ENCODE measurements at regions of chr12 and their contacts with region 1.

Region 1: DNA sequence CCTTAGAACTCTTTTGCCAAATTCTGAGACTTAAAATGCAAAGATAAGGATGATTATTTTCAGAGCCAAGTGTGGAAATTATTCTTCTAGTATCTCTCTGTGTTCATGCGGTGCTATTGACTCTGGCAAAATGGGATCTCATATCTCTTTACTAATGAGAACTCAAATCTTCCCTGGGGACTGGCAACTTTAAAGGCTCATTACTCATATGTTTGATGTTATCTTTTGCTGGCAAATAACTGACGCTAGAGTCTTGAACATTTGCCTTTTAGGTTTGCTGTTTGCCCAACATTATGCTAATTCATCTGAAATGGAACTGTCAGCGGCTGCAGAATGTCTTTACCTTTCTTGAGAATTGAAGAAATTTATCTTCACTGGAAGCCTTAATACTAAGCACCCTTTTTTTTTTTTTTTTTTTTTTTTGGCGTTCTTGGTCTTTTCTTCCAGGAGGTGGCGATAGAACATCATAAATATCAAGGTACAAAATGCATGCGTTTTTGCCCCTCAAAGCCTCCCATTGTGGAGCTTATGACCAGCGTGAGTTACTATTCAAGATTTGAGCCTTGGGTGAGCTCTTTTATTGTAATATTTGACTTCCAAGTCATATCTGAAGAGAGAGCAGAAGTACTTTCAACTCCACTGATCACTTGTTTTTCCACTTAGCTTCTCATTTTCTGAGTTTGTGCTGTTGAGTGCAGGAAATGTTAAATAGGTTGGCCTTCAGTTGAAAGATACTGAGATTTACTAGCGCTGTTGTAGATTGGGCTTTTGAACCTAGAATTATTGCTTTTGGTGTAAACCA is 86.6 kb downstream of the CAND1 start:
- DNase-seq: peak in 4 of 9 experiments; percentile 11 to 76 (median 44)
- ATAC-seq: peak; percentile 61
- H3K4me3 ChIP-seq: no peak overlapping the region
- H3K4me3 Mint-ChIP-seq: no peak overlapping the region
- H3K27ac ChIP-seq: no peak overlapping the region
- H3K27ac Mint-ChIP-seq: no peak overlapping the region
- H3K4me1 ChIP-seq: peaks cover 5% of the 10 kb centered on the region
- H3K4me1 Mint-ChIP-seq: peaks cover 7% of the 10 kb centered on the region
- H3K27me3 ChIP-seq: no peaks in the 10 kb centered on the region
- H3K27me3 Mint-ChIP-seq: no peaks in the 10 kb centered on the region
- CTCF ChIP-seq: peak; percentile 76

Region 2: GRCh38 chr12:67182551-67182950 is 173.2 kb before region 1 on chr12:
- CTCF ChIA-PET with region 1: no interaction called
- POLR2A ChIA-PET with region 1: no interaction called
- intact Hi-C with region 1: no loop called
- DNase-seq: no peak
- ATAC-seq: no peak
- H3K4me3 ChIP-seq: no peak overlapping the region
- H3K4me3 Mint-ChIP-seq: no peak overlapping the region
- H3K27ac ChIP-seq: no peak overlapping the region
- H3K27ac Mint-ChIP-seq: no peak overlapping the region
- H3K4me1 ChIP-seq: no peaks in the 10 kb centered on the region
- H3K4me1 Mint-ChIP-seq: no peaks in the 10 kb centered on the region
- H3K27me3 ChIP-seq: peaks cover 4 to 5% of the 10 kb centered on the region in 2 experiments
- H3K27me3 Mint-ChIP-seq: peaks cover 25% of the 10 kb centered on the region
- CTCF ChIP-seq: no peak

Region 3: DNA sequence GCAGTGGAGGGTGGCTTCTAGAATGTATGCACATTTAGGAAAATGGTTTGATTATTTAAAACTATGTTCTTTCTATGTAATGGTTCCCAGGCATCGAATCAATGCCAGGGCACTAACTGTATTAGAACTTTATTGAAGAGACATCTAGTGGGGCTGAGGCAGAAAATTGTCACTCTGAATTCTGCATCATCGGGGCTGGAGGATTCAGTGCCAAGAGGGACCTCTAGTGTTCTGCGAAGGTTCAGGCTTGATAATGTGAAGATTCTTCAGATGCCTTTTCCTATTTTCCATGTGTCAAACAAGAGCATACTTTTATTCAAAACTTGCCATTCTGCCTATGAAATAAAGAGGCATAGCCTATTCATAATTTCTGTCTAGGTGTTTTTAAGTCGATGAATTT is 59.7 kb after region 1 on chr12:
- CTCF ChIA-PET with region 1: no interaction called
- POLR2A ChIA-PET with region 1: no interaction called
- intact Hi-C with region 1: no loop called
- DNase-seq: peak in 1 of 9 experiments; percentile 4
- ATAC-seq: no peak
- H3K4me3 ChIP-seq: no peak overlapping the region
- H3K4me3 Mint-ChIP-seq: no peak overlapping the region
- H3K27ac ChIP-seq: no peak overlapping the region
- H3K27ac Mint-ChIP-seq: no peak overlapping the region
- H3K4me1 ChIP-seq: no peaks in the 10 kb centered on the region
- H3K4me1 Mint-ChIP-seq: no peaks in the 10 kb centered on the region
- H3K27me3 ChIP-seq: no peaks in the 10 kb centered on the region
- H3K27me3 Mint-ChIP-seq: no peaks in the 10 kb centered on the region
- CTCF ChIP-seq: no peak

Region 4: GRCh38 chr12:67441736-67442346 is 86.1 kb after region 1 on chr12:
- CTCF ChIA-PET with region 1: interaction called, 4 read pairs
- POLR2A ChIA-PET with region 1: no interaction called
- intact Hi-C with region 1: loop called (anchors 1 to 2 kb)
- DNase-seq: peak; percentile 55 to 89 (median 80)
- ATAC-seq: peak; percentile 98
- H3K4me3 ChIP-seq: no peak overlapping the region
- H3K4me3 Mint-ChIP-seq: peak overlapping the region; percentile 45
- H3K27ac ChIP-seq: no peak overlapping the region
- H3K27ac Mint-ChIP-seq: peak overlapping the region; percentile 60
- H3K4me1 ChIP-seq: peaks cover 13% of the 10 kb centered on the region
- H3K4me1 Mint-ChIP-seq: peaks cover 26% of the 10 kb centered on the region
- H3K27me3 ChIP-seq: no peaks in the 10 kb centered on the region
- H3K27me3 Mint-ChIP-seq: no peaks in the 10 kb centered on the region
- CTCF ChIP-seq: peak; percentile 70

Region 5: GRCh38 chr12:67698672-67699581 is 343.1 kb after region 1 on chr12:
- CTCF ChIA-PET with region 1: no interaction called
- POLR2A ChIA-PET with region 1: no interaction called
- intact Hi-C with region 1: loop called in 1 of 2 experiments (anchors 5 kb)
- DNase-seq: peak in 8 of 9 experiments; percentile 26 to 72 (median 58)
- ATAC-seq: peak; percentile 80
- H3K4me3 ChIP-seq: peak overlapping the region; percentile 23 to 46
- H3K4me3 Mint-ChIP-seq: peak overlapping the region; percentile 82
- H3K27ac ChIP-seq: peak overlapping the region; percentile 6 to 72
- H3K27ac Mint-ChIP-seq: peak overlapping the region; percentile 89
- H3K4me1 ChIP-seq: peaks cover 28% of the 10 kb centered on the region
- H3K4me1 Mint-ChIP-seq: peaks cover 73% of the 10 kb centered on the region
- H3K27me3 ChIP-seq: no peaks in the 10 kb centered on the region
- H3K27me3 Mint-ChIP-seq: no peaks in the 10 kb centered on the region
- CTCF ChIP-seq: no peak

Region 6: GRCh38 chr12:68040450-68041075 is 684.8 kb after region 1 on chr12:
- CTCF ChIA-PET with region 1: interaction called, 9 read pairs
- POLR2A ChIA-PET with region 1: interaction called, 3 read pairs
- intact Hi-C with region 1: loop called (anchors 1 to 2 kb)
- DNase-seq: peak; percentile 15 to 85 (median 65)
- ATAC-seq: peak; percentile 79
- H3K4me3 ChIP-seq: no peak overlapping the region
- H3K4me3 Mint-ChIP-seq: no peak overlapping the region
- H3K27ac ChIP-seq: no peak overlapping the region
- H3K27ac Mint-ChIP-seq: no peak overlapping the region
- H3K4me1 ChIP-seq: no peaks in the 10 kb centered on the region
- H3K4me1 Mint-ChIP-seq: peaks cover 25% of the 10 kb centered on the region
- H3K27me3 ChIP-seq: no peaks in the 10 kb centered on the region
- H3K27me3 Mint-ChIP-seq: no peaks in the 10 kb centered on the region
- CTCF ChIP-seq: peak; percentile 89

Region 7: DNA sequence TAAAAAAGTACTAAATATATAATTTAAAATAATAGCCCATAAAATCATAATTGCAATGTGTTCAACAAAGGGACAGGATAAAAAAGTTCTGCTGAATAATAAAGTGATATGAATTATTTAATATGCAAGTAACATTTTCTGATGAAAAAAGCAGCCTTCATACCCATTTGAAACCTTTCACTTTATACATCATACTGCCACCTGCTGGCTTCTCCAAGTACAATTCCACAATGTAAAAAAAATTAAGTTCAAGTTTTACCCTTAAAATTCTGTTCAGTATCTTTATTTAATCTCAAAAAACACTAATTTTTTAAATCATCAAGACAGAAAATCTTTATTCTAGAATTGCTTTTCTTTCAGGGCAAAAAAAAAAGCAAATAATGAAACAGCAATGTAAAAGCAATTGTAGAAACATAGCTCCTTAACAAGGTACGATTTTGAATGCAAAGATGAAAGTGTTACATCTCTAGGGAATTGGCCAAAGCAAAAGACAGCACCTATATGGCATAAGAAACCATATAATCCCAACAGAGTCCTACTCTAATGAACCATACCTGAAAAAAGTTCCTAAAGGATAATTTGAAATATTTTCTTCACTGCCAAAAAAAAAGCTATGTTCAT is 961.4 kb after region 1 on chr12:
- CTCF ChIA-PET with region 1: interaction called, 9 read pairs
- POLR2A ChIA-PET with region 1: interaction called, 3 read pairs
- intact Hi-C with region 1: loop called (anchors 1 kb)
- DNase-seq: peak in 8 of 9 experiments; percentile 21 to 75 (median 48)
- ATAC-seq: peak; percentile 36
- H3K4me3 ChIP-seq: no peak overlapping the region
- H3K4me3 Mint-ChIP-seq: no peak overlapping the region
- H3K27ac ChIP-seq: no peak overlapping the region
- H3K27ac Mint-ChIP-seq: no peak overlapping the region
- H3K4me1 ChIP-seq: no peaks in the 10 kb centered on the region
- H3K4me1 Mint-ChIP-seq: no peaks in the 10 kb centered on the region
- H3K27me3 ChIP-seq: no peaks in the 10 kb centered on the region
- H3K27me3 Mint-ChIP-seq: no peaks in the 10 kb centered on the region
- CTCF ChIP-seq: peak; percentile 86

Measured in CD8-positive, alpha-beta T cell (primary cell).